ENCODE measurements at regions of chr9 and their contacts with region 1.

Region 1: DNA sequence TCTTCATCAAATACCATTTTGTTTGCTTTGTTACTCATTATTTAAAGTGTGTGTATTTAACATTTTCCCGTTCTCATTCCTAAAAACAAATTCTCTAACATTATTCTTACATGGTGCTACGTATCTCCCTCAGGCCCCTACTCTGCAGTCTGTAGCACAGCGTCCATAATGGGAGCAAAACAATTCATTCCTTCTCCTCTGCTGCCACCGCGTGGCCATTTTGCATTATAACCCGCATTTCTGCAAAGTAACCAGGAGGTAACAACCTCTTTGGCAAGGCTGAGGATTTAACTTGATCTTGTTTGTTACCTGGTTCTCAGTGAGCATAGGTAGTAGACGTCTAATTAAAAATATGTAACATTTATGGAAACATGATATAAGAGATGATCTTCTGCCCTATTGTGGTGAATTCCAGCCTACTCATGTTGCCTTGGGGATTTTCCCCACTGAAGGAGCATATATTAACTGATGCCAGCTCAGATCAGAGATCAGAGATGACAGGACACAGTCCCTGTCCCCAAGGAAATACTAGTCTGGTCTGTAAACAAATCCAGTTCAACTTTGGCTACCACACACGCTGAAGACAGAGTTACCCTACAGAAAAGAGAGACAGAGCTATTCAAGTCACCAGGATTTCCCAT is 10.5 kb downstream of the OR1K1 start:
- DNase-seq: peak; percentile 51 to 76 (median 67)
- ATAC-seq: peak; percentile 97 to 99 (median 98)
- H3K4me3 ChIP-seq: no peak overlapping the region
- H3K27ac ChIP-seq: no peak overlapping the region
- H3K4me1 ChIP-seq: no peaks in the 10 kb centered on the region
- H3K27me3 ChIP-seq: no peaks in the 10 kb centered on the region
- CTCF ChIP-seq: peak; percentile 66 to 88 (median 78)
- POLR2A ChIP-seq: no peak

Region 2: DNA sequence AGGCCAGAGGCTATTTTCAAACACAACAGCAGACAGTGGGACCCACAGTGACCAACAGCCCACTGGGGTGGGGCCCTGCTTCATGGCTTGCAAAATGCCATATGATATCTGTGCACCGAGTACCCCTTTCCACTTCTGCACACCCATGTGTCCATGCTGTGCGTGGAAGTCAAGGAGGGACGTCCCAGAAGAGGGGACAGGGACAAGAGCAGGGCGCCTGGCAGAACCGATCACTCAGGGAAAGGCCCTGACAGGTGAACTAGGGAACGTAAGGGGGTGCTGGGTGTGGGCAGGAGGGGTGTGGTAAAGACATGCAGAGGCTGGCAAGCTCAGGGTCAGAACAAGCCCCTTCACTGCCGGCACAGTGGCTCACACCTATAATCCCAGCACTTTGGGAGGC is 709.7 kb before region 1 on chr9:
- intact Hi-C with region 1: loop called in 1 of 2 experiments (anchors 5 kb)
- DNase-seq: peak in 1 of 3 donors; percentile 11
- ATAC-seq: no peak
- H3K4me3 ChIP-seq: no peak overlapping the region
- H3K27ac ChIP-seq: no peak overlapping the region
- H3K4me1 ChIP-seq: no peaks in the 10 kb centered on the region
- H3K27me3 ChIP-seq: no peaks in the 10 kb centered on the region
- CTCF ChIP-seq: no peak
- POLR2A ChIP-seq: no peak

Region 3: DNA sequence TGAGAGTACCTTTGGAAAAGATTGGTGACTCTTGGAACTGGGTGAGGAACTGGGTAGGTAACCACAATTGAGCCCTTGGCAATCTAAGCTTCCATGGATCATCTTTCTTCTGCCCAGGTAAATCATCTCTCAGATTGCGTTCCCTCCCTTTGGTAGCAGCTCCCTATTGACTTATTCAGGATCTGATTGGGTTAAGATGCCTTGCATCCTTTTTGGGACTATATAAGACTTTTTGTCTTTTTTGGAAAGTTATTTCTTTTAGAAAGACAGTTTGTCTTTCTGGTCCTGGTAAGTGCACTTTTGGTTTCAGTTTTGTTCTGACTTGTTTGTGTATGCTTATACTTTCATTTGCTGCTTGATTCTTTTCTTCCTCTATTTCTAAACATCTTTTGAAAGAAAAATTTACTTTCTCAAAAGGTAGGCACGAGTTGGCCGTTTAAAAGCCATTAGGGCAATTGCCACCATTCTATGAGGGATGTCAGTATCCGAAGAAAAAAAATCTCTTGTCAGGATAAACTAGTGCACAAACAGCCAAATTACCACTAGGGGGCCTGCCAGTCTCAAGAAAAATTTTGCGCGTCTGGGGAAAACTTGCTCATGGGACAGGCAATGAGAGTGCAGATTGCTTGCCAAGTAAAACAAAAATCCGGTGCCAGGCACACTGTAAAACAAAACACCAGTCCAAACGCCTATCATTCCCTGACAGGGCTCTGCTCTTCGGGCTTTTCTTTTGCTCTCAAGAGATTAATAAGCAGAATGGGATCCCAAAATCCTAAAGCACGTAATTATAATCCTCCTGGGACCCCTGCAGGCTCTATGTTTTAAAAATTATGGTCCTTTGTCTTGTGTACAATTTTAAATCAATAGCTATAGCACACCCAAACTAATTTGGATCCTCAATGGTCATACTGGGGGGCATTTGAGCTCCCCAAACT is 345.5 kb before region 1 on chr9:
- intact Hi-C with region 1: loop called in 1 of 2 experiments (anchors 10 kb)
- DNase-seq: peak; percentile 60 to 87 (median 66)
- ATAC-seq: peak; percentile 97 to 99 (median 98)
- H3K4me3 ChIP-seq: peak overlapping the region; percentile 30 to 57 (median 30)
- H3K27ac ChIP-seq: peak overlapping the region in 1 of 3 donors; percentile 22
- H3K4me1 ChIP-seq: peaks cover 0 to 8% (median 0%) of the 10 kb centered on the region in 4 donors
- H3K27me3 ChIP-seq: no peaks in the 10 kb centered on the region
- CTCF ChIP-seq: peak; percentile 71 to 91 (median 84)
- POLR2A ChIP-seq: no peak